ENCODE measurements at regions of chr5 and their contacts with region 1.

Region 1: GRCh38 chr5:116068028-116068632 is 16.7 kb upstream of the COMMD10 start:
- DNase-seq: no peak
- ATAC-seq: peak; percentile 74
- H3K4me3 ChIP-seq: no peak overlapping the region
- H3K27ac ChIP-seq: no peak overlapping the region
- H3K4me1 ChIP-seq: no peaks in the 10 kb centered on the region
- H3K27me3 ChIP-seq: peaks cover 2 to 3% of the 10 kb centered on the region in 2 experiments; a peak in 3 of 4 replicates
- CTCF ChIP-seq: peak; percentile 42 to 68 (median 67); a peak in 5 of 6 replicates
- EP300 ChIP-seq: no peak
- POLR2A ChIP-seq: no peak
- RAD21 ChIP-seq: peak; percentile 84

Region 2: GRCh38 chr5:115888027-115888426 is 180.1 kb before region 1 on chr5:
- CTCF ChIA-PET with region 1: interaction called, 8 read pairs
- POLR2A ChIA-PET with region 1: no interaction called
- RAD21 ChIA-PET with region 1: interaction called, 4 read pairs
- SMC1A ChIA-PET with region 1: interaction called, 3 read pairs
- in situ Hi-C with region 1: no loop called
- intact Hi-C with region 1: loop called (anchors 2 kb)
- DNase-seq: no peak
- ATAC-seq: no peak
- H3K4me3 ChIP-seq: no peak overlapping the region
- H3K27ac ChIP-seq: no peak overlapping the region
- H3K4me1 ChIP-seq: no peaks in the 10 kb centered on the region
- H3K27me3 ChIP-seq: no peaks in the 10 kb centered on the region
- CTCF ChIP-seq: no peak; a peak in 1 of 6 replicates
- EP300 ChIP-seq: no peak
- POLR2A ChIP-seq: no peak
- RAD21 ChIP-seq: peak; percentile 15; the same call in 1 of the 2 replicates

Region 3: DNA sequence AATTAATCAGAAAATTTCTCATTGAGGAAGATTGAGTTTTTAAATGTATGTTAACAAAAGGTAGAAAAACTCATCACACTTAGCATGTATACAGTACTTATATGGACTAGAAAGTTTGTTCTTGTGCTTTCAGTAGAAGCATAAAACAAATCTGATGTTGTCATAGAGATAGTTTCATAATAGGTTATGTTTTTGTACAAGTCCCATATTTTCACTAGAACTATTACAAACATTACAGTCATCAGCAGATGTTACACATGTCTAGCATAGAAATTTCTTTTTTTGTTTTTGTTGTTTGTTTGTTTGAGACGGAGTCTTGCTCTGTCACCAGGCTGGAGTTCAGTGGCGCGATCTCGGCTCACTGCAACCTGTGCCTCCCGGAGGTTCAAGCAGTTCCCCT is 148.1 kb after region 1 on chr5:
- CTCF ChIA-PET with region 1: no interaction called
- POLR2A ChIA-PET with region 1: no interaction called
- RAD21 ChIA-PET with region 1: no interaction called
- SMC1A ChIA-PET with region 1: no interaction called
- in situ Hi-C with region 1: no loop called
- intact Hi-C with region 1: no loop called
- DNase-seq: no peak
- ATAC-seq: no peak
- H3K4me3 ChIP-seq: no peak overlapping the region
- H3K27ac ChIP-seq: no peak overlapping the region
- H3K4me1 ChIP-seq: no peaks in the 10 kb centered on the region
- H3K27me3 ChIP-seq: no peaks in the 10 kb centered on the region
- CTCF ChIP-seq: no peak
- EP300 ChIP-seq: no peak
- POLR2A ChIP-seq: no peak
- RAD21 ChIP-seq: no peak

Measured in GM12878 (cell line).